Calu3 (cell line): ENCODE measurements at regions of chr13 and their contacts with region 1.

Region 1: DNA sequence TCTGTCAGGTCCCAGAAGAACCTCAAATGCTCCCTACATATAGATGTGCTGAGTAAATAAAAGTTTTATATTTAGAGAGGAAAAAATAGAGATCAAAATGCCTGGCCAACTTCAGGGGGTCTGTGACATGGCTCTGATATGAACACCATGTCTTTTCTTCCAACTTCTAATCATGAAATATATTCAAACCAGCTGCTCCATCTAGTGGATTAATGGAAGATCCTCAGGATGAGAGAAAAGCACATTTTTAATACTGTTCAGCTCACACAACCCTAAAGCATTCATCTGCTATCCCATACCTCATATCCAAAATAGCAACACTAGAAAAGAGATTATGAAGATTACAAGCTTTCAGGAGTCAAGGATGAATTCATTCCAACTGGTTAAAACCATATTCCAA is 56.0 kb upstream of the DOCK9 start:
- DNase-seq: no peak
- H3K4me3 Mint-ChIP-seq: no peak overlapping the region
- H3K27ac Mint-ChIP-seq: no peak overlapping the region
- H3K4me1 Mint-ChIP-seq: peaks cover 7% of the 10 kb centered on the region
- H3K27me3 Mint-ChIP-seq: no peaks in the 10 kb centered on the region
- CTCF ChIP-seq: no peak

Region 2: GRCh38 chr13:98842864-98843481 is 190.8 kb before region 1 on chr13:
- CTCF ChIA-PET with region 1: no interaction called
- intact Hi-C with region 1: loop called (anchors 5 kb)
- DNase-seq: peak; percentile 54
- H3K4me3 Mint-ChIP-seq: no peak overlapping the region
- H3K27ac Mint-ChIP-seq: no peak overlapping the region
- H3K4me1 Mint-ChIP-seq: no peaks in the 10 kb centered on the region
- H3K27me3 Mint-ChIP-seq: no peaks in the 10 kb centered on the region
- CTCF ChIP-seq: peak; percentile 26

Region 3: DNA sequence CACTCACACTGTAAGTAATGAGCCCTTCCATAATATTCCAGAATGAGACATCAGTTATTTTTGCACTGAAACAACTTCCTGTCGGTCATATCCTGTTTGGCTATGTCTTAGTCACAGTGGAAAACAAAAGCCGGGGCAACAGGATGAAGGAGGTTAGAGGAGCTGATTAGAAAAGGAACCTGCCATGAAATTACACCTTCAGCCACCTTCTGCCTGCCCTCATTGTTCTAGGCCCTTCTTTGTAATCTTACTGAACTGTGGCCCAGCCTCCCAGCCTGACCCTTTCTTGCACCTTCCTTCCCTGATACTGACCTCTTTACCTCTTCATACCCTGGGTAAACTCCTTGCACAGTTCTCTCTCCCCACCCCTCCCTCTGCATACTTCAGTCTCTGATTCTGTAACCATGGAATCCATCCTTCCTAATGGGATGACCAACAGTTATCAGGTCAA is 123.3 kb before region 1 on chr13:
- CTCF ChIA-PET with region 1: no interaction called
- intact Hi-C with region 1: loop called (anchors 10 kb)
- DNase-seq: peak; percentile 1
- H3K4me3 Mint-ChIP-seq: no peak overlapping the region
- H3K27ac Mint-ChIP-seq: peak overlapping the region; percentile 71
- H3K4me1 Mint-ChIP-seq: peaks cover 9% of the 10 kb centered on the region
- H3K27me3 Mint-ChIP-seq: no peaks in the 10 kb centered on the region
- CTCF ChIP-seq: no peak

Region 4: DNA sequence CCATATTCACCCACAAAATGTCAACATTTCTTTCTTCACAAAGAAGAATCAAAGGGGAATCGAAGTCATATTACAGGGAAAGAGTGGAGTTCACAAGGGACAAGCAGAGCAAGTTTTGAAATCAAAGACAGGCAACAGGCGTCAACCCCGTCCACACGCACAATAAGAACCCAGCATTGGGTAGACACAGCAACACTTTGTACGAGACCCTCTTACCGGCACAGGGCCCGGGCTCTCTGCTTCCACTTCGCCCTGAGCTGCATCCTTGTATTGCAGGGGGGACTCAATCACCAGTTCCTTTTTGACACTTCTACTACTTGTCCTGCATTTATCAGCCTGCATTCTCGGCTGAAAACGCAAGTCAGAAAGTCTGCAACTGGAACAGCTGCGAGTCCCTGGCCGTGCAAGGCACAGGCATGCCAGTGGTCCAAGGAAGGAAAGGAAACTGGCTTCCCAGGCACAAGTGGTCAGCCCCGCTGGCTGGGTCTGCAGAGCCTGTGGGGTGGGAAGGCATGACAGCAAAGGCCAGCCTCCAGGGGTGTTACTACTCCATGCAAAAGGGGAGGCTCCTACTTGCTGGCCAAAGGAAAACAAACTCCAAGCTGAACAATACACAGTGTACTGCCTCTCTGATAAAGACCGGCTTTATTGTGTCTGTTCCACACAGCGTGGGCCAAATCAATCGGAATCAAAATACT is 56.1 kb before region 1 on chr13 and contains the start of gene DOCK9:
- CTCF ChIA-PET with region 1: no interaction called
- intact Hi-C with region 1: loop called (anchors 5 kb)
- DNase-seq: peak; percentile 22
- H3K4me3 Mint-ChIP-seq: peak within 1 kb of the TSS; percentile 68
- H3K27ac Mint-ChIP-seq: peak within 1 kb of the TSS; percentile 44
- H3K4me1 Mint-ChIP-seq: peaks cover 14% of the 10 kb centered on the region
- H3K27me3 Mint-ChIP-seq: no peaks in the 10 kb centered on the region
- CTCF ChIP-seq: no peak
- total RNA-seq, gene DOCK9: 21.1 and 26.2 TPM in 2 replicates